ENCODE measurements at regions of chr17 and their contacts with region 1.

Region 1: DNA sequence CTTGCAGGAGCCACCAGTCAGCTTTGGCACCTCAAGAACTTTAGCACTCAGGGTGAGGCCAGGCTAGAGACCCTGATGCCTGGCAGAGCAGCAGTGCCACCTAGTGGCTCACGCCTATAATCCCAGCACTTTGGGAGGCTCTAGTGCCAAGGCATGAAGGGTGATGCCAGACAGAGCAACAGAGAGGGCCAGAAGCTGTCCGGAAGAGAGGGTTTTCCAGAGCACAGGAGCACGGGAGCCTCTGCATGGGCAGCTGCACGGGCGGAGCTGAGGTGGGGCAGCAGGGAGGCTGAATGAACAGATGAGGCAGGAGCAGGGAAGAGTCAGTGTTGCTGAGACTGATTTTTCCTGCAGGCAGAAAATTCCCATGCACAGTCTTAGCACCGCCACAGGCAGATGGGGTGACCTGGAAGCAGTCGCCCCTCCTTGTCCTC is 38.9 kb downstream of the MYH3 start:
- DNase-seq: peak; percentile 78
- H3K4me3 ChIP-seq: no peak overlapping the region
- H3K27ac ChIP-seq: no peak overlapping the region
- H3K4me1 ChIP-seq: peaks cover 0 to 23% (median 16%) of the 10 kb centered on the region in 4 donors
- H3K27me3 ChIP-seq: no peaks in the 10 kb centered on the region
- CTCF ChIP-seq: peak; percentile 37 to 77 (median 75)
- EP300 ChIP-seq: no peak
- POLR2A ChIP-seq: no peak

Region 2: DNA sequence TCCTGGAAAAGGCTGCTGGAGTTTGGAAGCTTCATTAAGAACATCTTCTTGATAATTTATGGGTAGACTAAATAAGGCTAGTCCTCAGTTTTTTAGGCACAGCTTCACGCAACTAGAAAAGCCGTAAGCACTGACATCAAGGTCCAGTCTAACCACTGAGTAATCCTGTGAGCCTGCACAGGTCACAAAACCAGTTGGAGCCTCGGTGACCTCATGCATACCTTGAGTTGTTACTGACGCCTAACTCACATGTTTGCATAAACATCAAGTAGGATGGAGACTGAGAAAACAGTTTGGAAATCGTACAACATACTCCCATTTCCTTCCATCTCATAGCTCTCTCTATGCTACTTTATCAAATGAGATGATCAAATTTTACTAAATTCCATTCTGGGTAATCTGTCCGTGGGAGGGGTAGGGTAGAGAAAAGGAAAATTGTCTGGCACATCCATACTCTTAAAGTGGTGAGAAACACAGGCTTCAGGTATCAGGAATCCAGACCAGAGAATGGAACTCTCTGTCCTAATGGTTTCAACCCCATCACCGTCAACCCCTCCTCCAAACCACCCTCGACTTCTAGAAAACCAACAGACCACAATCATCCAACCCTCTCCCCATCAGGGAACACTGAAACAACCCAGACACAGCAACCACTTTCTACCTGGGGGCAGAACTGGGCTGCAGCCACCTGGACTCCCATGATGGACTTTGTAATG is 649.2 kb before region 1 on chr17:
- intact Hi-C with region 1: loop called (anchors 10 kb)
- DNase-seq: no peak
- H3K4me3 ChIP-seq: no peak overlapping the region
- H3K27ac ChIP-seq: no peak overlapping the region
- H3K4me1 ChIP-seq: peaks cover 0 to 11% (median 8%) of the 10 kb centered on the region in 4 donors
- H3K27me3 ChIP-seq: no peaks in the 10 kb centered on the region
- CTCF ChIP-seq: no peak
- EP300 ChIP-seq: no peak
- POLR2A ChIP-seq: no peak

Region 3: DNA sequence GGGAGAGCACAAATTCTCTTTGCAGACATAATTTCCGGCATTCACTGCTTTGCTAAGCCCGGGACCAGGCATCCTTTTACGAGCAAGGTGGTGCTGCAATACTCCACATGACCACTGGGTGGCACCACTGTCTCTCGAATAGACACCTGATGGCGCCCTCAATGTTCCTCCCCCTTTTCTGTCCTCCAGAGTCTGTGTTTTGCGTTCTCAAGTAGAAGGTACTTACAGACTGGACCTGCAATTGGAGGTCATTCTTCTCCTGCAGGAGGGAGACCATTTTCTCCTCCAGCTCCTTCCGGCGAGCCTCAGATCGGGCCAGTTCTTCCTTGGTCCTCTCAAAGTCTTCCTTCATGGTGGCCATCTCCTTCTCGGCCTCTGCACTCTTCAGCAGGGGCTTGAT is 290.6 kb before region 1 on chr17:
- intact Hi-C with region 1: loop called (anchors 2 kb)
- DNase-seq: peak; percentile 86
- H3K4me3 ChIP-seq: no peak overlapping the region
- H3K27ac ChIP-seq: no peak overlapping the region
- H3K4me1 ChIP-seq: no peaks in the 10 kb centered on the region
- H3K27me3 ChIP-seq: no peaks in the 10 kb centered on the region
- CTCF ChIP-seq: peak; percentile 43 to 95 (median 88)
- EP300 ChIP-seq: no peak
- POLR2A ChIP-seq: no peak